Caco-2 (cell line): ENCODE measurements at regions of chr2 and their contacts with region 1.

Region 1: GRCh38 chr2:83487451-83487850 is 971.6 kb downstream of the SUCLG1 start:
- DNase-seq: no peak
- H3K4me3 ChIP-seq: no peak overlapping the region
- H3K4me3 Mint-ChIP-seq: no peak overlapping the region
- H3K27ac Mint-ChIP-seq: no peak overlapping the region
- H3K4me1 ChIP-seq: no peaks in the 10 kb centered on the region
- H3K4me1 Mint-ChIP-seq: no peaks in the 10 kb centered on the region
- H3K27me3 ChIP-seq: no peaks in the 10 kb centered on the region
- H3K27me3 Mint-ChIP-seq: no peaks in the 10 kb centered on the region
- CTCF ChIP-seq: no peak

Region 2: GRCh38 chr2:83536556-83536955 is 49.1 kb after region 1 on chr2:
- CTCF ChIA-PET with region 1: no interaction called
- POLR2A ChIA-PET with region 1: no interaction called
- intact Hi-C with region 1: loop called (anchors 5 kb)
- DNase-seq: no peak
- H3K4me3 ChIP-seq: no peak overlapping the region
- H3K4me3 Mint-ChIP-seq: no peak overlapping the region
- H3K27ac Mint-ChIP-seq: no peak overlapping the region
- H3K4me1 ChIP-seq: no peaks in the 10 kb centered on the region
- H3K4me1 Mint-ChIP-seq: no peaks in the 10 kb centered on the region
- H3K27me3 ChIP-seq: no peaks in the 10 kb centered on the region
- H3K27me3 Mint-ChIP-seq: no peaks in the 10 kb centered on the region
- CTCF ChIP-seq: no peak

Region 3: GRCh38 chr2:83802604-83803003 is 315.2 kb after region 1 on chr2:
- CTCF ChIA-PET with region 1: no interaction called
- POLR2A ChIA-PET with region 1: no interaction called
- intact Hi-C with region 1: no loop called
- DNase-seq: no peak
- H3K4me3 ChIP-seq: no peak overlapping the region
- H3K4me3 Mint-ChIP-seq: no peak overlapping the region
- H3K27ac Mint-ChIP-seq: no peak overlapping the region
- H3K4me1 ChIP-seq: no peaks in the 10 kb centered on the region
- H3K4me1 Mint-ChIP-seq: no peaks in the 10 kb centered on the region
- H3K27me3 ChIP-seq: no peaks in the 10 kb centered on the region
- H3K27me3 Mint-ChIP-seq: no peaks in the 10 kb centered on the region
- CTCF ChIP-seq: no peak